ENCODE measurements at regions of chr22 and their contacts with region 1.

Region 1: DNA sequence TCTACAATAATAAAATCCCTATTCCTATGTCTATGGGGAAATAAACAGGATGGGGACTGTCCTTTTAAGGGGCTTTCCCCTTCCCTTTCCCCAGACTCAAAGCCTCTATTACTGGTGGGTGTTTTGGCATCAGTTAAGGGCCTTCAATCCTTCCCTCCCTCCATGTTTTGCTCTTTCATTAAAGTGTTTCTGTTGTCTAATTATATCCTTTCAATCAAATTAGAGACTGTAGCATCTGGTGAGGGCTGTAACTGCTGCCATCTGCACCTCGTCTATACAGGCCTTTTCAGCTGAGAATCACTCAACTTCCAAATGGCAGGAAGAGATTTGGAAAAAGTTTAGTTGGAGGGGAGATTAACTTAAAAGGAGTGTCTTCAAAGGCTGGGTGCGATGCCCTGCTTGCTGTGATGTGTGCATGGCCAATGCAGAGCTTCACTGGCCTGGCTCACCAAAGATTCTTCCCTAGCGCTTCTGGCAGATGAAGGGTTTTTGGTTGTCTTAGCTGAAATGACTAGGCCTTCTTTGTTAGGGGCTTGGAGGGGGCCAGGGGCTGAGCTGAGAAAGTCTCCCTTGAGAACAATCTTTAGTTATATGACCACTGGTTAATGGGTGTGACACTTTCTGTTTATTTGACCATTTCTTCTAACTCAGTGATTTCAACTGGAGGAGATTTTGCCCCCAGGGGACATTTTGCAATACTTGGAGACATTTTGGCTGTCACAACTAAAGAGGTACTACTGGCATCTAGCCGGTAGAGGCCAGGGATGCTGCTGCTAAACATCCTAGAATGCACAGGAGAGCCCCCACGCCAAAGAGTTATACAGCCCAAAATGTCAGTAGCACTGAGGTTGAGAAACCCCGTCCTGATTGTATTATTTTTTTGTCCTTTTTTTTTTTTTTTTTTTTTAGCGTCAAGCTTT is 7.5 kb downstream of the KREMEN1 start:
- DNase-seq: no peak
- H3K4me3 ChIP-seq: no peak overlapping the region
- H3K4me3 Mint-ChIP-seq: no peak overlapping the region
- H3K27ac ChIP-seq: no peak overlapping the region
- H3K27ac Mint-ChIP-seq: no peak overlapping the region
- H3K4me1 ChIP-seq: peaks cover 12 to 15% of the 10 kb centered on the region in 2 donors
- H3K4me1 Mint-ChIP-seq: peaks cover 10% of the 10 kb centered on the region
- H3K27me3 ChIP-seq: peaks cover 6 to 13% of the 10 kb centered on the region in 2 donors
- H3K27me3 Mint-ChIP-seq: peaks cover 7 to 20% (median 9%) of the 10 kb centered on the region in 3 donors
- CTCF ChIP-seq: no peak

Region 2: GRCh38 chr22:28800308-28801077 is 279.8 kb before region 1 on chr22 and contains the start of gene XBP1:
- intact Hi-C with region 1: no loop called
- DNase-seq: peak; percentile 92 to 96 (median 96)
- H3K4me3 ChIP-seq: peak within 1 kb of the TSS; percentile 91 to 98 (median 94)
- H3K4me3 Mint-ChIP-seq: peak within 1 kb of the TSS; percentile 91 to 98
- H3K27ac ChIP-seq: peak within 1 kb of the TSS; percentile 98 to 99
- H3K27ac Mint-ChIP-seq: peak within 1 kb of the TSS; percentile 98 to 100 (median 99)
- H3K4me1 ChIP-seq: peaks cover 39 to 50% of the 10 kb centered on the region in 2 donors
- H3K4me1 Mint-ChIP-seq: peaks cover 50% of the 10 kb centered on the region
- H3K27me3 ChIP-seq: no peaks in the 10 kb centered on the region
- H3K27me3 Mint-ChIP-seq: peaks cover 0 to 7% (median 1%) of the 10 kb centered on the region in 3 donors
- CTCF ChIP-seq: no peak
- polyA plus RNA-seq, gene XBP1: 175 to 215 (median 201) TPM

Region 3: GRCh38 chr22:29096736-29097669 is 16.7 kb after region 1 on chr22:
- intact Hi-C with region 1: no loop called
- DNase-seq: no peak
- H3K4me3 ChIP-seq: no peak overlapping the region
- H3K4me3 Mint-ChIP-seq: no peak overlapping the region
- H3K27ac ChIP-seq: no peak overlapping the region
- H3K27ac Mint-ChIP-seq: no peak overlapping the region
- H3K4me1 ChIP-seq: no peaks in the 10 kb centered on the region
- H3K4me1 Mint-ChIP-seq: peaks cover 2% of the 10 kb centered on the region
- H3K27me3 ChIP-seq: no peaks in the 10 kb centered on the region
- H3K27me3 Mint-ChIP-seq: peaks cover 3 to 6% (median 5%) of the 10 kb centered on the region in 3 donors
- CTCF ChIP-seq: no peak

Region 4: DNA sequence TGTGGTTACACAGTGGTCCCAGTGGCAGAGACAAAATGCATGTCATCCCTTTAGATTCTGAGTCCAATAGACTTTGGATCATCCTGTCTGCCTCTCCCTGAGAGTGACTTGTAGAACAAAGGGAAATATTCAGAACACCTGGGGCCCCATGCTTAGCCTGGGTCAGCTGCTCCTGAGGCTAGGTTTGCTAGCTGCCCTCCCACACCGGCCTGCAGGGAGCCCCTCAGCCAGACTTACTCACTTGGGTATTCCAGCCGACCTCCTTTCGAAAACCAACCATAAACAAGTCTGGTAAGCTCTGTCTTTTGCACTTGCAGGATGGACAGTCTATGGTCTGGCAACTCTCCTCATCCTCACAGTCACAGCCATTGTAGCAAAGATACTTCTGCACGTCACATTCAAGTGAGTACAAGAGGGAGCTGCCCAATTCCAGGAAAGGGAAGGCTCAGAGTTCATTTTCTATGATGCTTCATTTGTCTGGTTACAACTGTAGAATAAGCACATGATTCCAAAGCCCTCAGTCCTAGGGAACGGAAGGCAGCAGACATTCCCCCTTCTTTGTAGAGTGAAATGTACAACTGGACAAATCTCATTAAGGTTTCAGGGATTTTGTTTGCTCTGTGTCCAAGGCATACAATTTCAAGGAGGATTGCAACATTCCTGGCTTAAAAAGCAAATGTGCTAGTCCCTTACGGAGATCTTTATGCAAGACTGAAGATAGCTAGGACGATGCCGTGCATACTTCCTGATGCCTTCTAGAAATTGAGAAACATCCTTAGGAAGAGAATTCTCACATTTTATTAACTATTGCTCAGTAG is 59.9 kb after region 1 on chr22:
- intact Hi-C with region 1: no loop called
- DNase-seq: no peak
- H3K4me3 ChIP-seq: no peak overlapping the region
- H3K4me3 Mint-ChIP-seq: no peak overlapping the region
- H3K27ac ChIP-seq: no peak overlapping the region
- H3K27ac Mint-ChIP-seq: no peak overlapping the region
- H3K4me1 ChIP-seq: no peaks in the 10 kb centered on the region
- H3K4me1 Mint-ChIP-seq: peaks cover 10% of the 10 kb centered on the region
- H3K27me3 ChIP-seq: no peaks in the 10 kb centered on the region
- H3K27me3 Mint-ChIP-seq: peaks cover 2 to 6% (median 3%) of the 10 kb centered on the region in 3 donors
- CTCF ChIP-seq: no peak

Region 5: GRCh38 chr22:29154364-29155048 is 74.2 kb after region 1 on chr22:
- intact Hi-C with region 1: loop called (anchors 2 to 10 kb)
- DNase-seq: peak; percentile 50 to 78 (median 62)
- H3K4me3 ChIP-seq: peak overlapping the region in 1 of 3 experiments; percentile 16
- H3K4me3 Mint-ChIP-seq: peak overlapping the region; percentile 57 to 66
- H3K27ac ChIP-seq: no peak overlapping the region
- H3K27ac Mint-ChIP-seq: no peak overlapping the region
- H3K4me1 ChIP-seq: peaks cover 21 to 29% of the 10 kb centered on the region in 2 donors
- H3K4me1 Mint-ChIP-seq: peaks cover 32% of the 10 kb centered on the region
- H3K27me3 ChIP-seq: no peaks in the 10 kb centered on the region
- H3K27me3 Mint-ChIP-seq: peaks cover 6 to 18% (median 12%) of the 10 kb centered on the region in 3 donors
- CTCF ChIP-seq: peak; percentile 97